Natural killer cell (primary cell): ENCODE measurements at regions of chr11 and their contacts with region 1.

Region 1: GRCh38 chr11:121451986-121452608 is at the start of gene SORL1:
- DNase-seq: peak; percentile 72 to 87
- ATAC-seq: peak; percentile 57 to 75 (median 70)
- H3K4me3 ChIP-seq: peak within 1 kb of the TSS; percentile 89
- H3K4me3 Mint-ChIP-seq: peak within 1 kb of the TSS; percentile 99
- H3K27ac ChIP-seq: peak within 1 kb of the TSS; percentile 82
- H3K27ac Mint-ChIP-seq: peak within 1 kb of the TSS; percentile 98 to 99
- H3K4me1 ChIP-seq: peaks cover 80% of the 10 kb centered on the region
- H3K4me1 Mint-ChIP-seq: peaks cover 89% of the 10 kb centered on the region in 2 donors
- H3K27me3 ChIP-seq: no peaks in the 10 kb centered on the region
- H3K27me3 Mint-ChIP-seq: no peaks in the 10 kb centered on the region
- CTCF ChIP-seq: peak; percentile 42
- total RNA-seq, gene SORL1: 386 to 519 (median 456) TPM

Region 2: GRCh38 chr11:121417055-121417551 is 35.0 kb before region 1 on chr11:
- intact Hi-C with region 1: loop called (anchors 2 kb)
- DNase-seq: peak; percentile 39 to 72
- ATAC-seq: peak; percentile 52 to 79 (median 61)
- H3K4me3 ChIP-seq: no peak overlapping the region
- H3K4me3 Mint-ChIP-seq: peak overlapping the region; percentile 55
- H3K27ac ChIP-seq: peak overlapping the region; percentile 70
- H3K27ac Mint-ChIP-seq: peak overlapping the region; percentile 87 to 89
- H3K4me1 ChIP-seq: peaks cover 32% of the 10 kb centered on the region
- H3K4me1 Mint-ChIP-seq: peaks cover 29 to 42% of the 10 kb centered on the region in 2 donors
- H3K27me3 ChIP-seq: no peaks in the 10 kb centered on the region
- H3K27me3 Mint-ChIP-seq: no peaks in the 10 kb centered on the region
- CTCF ChIP-seq: no peak

Region 3: GRCh38 chr11:121464352-121464946 is 12.4 kb after region 1 on chr11:
- intact Hi-C with region 1: loop called (anchors 1 kb)
- DNase-seq: peak; percentile 76 to 77
- ATAC-seq: peak; percentile 70 to 73 (median 70)
- H3K4me3 ChIP-seq: no peak overlapping the region
- H3K4me3 Mint-ChIP-seq: peak overlapping the region; percentile 86
- H3K27ac ChIP-seq: peak overlapping the region; percentile 68
- H3K27ac Mint-ChIP-seq: peak overlapping the region; percentile 98 to 99
- H3K4me1 ChIP-seq: peaks cover 92% of the 10 kb centered on the region
- H3K4me1 Mint-ChIP-seq: peaks cover 96 to 99% of the 10 kb centered on the region in 2 donors
- H3K27me3 ChIP-seq: no peaks in the 10 kb centered on the region
- H3K27me3 Mint-ChIP-seq: no peaks in the 10 kb centered on the region
- CTCF ChIP-seq: no peak

Region 4: GRCh38 chr11:121508449-121508848 is 56.4 kb after region 1 on chr11:
- intact Hi-C with region 1: loop called (anchors 1 kb)
- DNase-seq: peak; percentile 42 to 50
- ATAC-seq: peak; percentile 85 to 95 (median 94)
- H3K4me3 ChIP-seq: no peak overlapping the region
- H3K4me3 Mint-ChIP-seq: peak overlapping the region; percentile 78
- H3K27ac ChIP-seq: peak overlapping the region; percentile 62
- H3K27ac Mint-ChIP-seq: peak overlapping the region; percentile 92 to 93
- H3K4me1 ChIP-seq: peaks cover 20% of the 10 kb centered on the region
- H3K4me1 Mint-ChIP-seq: peaks cover 67 to 75% of the 10 kb centered on the region in 2 donors
- H3K27me3 ChIP-seq: no peaks in the 10 kb centered on the region
- H3K27me3 Mint-ChIP-seq: no peaks in the 10 kb centered on the region
- CTCF ChIP-seq: no peak

Region 5: GRCh38 chr11:121591405-121592033 is 139.4 kb after region 1 on chr11:
- intact Hi-C with region 1: loop called (anchors 2 kb)
- DNase-seq: peak; percentile 44 to 89
- ATAC-seq: peak; percentile 89 to 94 (median 92)
- H3K4me3 ChIP-seq: no peak overlapping the region
- H3K4me3 Mint-ChIP-seq: no peak overlapping the region
- H3K27ac ChIP-seq: no peak overlapping the region
- H3K27ac Mint-ChIP-seq: peak overlapping the region; percentile 52 to 73
- H3K4me1 ChIP-seq: peaks cover 18% of the 10 kb centered on the region
- H3K4me1 Mint-ChIP-seq: peaks cover 16 to 30% of the 10 kb centered on the region in 2 donors
- H3K27me3 ChIP-seq: no peaks in the 10 kb centered on the region
- H3K27me3 Mint-ChIP-seq: no peaks in the 10 kb centered on the region
- CTCF ChIP-seq: peak; percentile 90